CD14-positive monocyte (primary cell): ENCODE measurements at regions of chr4 and their contacts with region 1.

Region 1: DNA sequence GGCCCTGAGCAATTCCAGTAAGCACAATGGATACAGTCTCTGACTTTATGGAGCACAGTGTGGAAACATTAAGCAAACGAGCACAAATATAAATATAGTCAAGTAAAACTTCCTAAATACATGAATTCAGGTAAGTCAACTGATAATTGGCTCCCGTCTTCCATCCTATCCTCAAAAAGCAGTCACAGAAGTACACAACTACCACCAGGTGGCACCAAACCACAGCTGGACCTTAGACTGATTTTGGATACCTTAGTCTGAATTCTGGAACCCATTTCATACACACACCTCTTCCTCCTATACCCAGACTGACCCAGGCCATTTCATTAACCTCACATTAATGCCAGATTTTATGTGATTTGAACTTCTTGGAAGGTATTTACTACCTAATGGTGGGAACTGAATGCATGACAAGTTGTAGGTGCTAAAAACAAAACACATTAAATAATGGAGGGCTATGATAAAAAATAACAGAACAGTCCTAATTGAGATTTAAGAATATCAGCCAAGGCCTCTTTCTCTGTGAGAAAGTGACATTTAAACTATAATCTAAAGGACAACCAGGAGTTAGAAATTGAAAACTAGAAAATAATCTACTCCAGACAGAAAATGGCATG is 77.5 kb downstream of the ELF2 start:
- DNase-seq: peak; percentile 68 to 75 (median 68)
- H3K4me3 ChIP-seq: no peak overlapping the region
- H3K4me3 Mint-ChIP-seq: no peak overlapping the region
- H3K27ac ChIP-seq: no peak overlapping the region
- H3K27ac Mint-ChIP-seq: no peak overlapping the region
- H3K4me1 ChIP-seq: no peaks in the 10 kb centered on the region
- H3K4me1 Mint-ChIP-seq: no peaks in the 10 kb centered on the region
- H3K27me3 ChIP-seq: no peaks in the 10 kb centered on the region
- H3K27me3 Mint-ChIP-seq: no peaks in the 10 kb centered on the region
- CTCF ChIP-seq: peak; percentile 82

Region 2: DNA sequence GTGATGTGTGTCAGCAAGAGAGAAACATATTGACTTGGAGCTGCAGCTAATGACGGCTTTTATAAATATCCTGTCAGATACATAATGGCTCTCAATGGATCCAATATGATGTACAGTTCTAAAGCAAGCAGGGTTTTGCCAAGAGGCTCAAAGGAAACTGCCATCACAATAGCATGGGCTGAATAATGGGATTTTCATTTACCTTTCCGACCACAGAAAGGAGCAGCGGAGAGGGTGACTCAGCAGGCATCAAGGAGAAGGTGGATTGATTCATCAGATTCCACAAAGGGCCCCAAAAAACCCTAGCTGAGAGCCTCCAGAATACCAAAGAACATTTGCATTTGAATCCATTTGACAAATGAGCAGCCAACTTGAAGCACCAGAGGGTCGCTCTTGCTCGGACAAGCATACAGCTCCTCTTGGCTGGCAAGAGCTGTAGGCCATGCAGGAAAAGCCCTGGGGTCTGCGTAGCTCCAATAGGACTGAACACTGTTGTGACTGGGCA is 439.6 kb before region 1 on chr4:
- intact Hi-C with region 1: no loop called
- DNase-seq: no peak
- H3K4me3 ChIP-seq: no peak overlapping the region
- H3K4me3 Mint-ChIP-seq: no peak overlapping the region
- H3K27ac ChIP-seq: no peak overlapping the region
- H3K27ac Mint-ChIP-seq: no peak overlapping the region
- H3K4me1 ChIP-seq: no peaks in the 10 kb centered on the region
- H3K4me1 Mint-ChIP-seq: no peaks in the 10 kb centered on the region
- H3K27me3 ChIP-seq: no peaks in the 10 kb centered on the region
- H3K27me3 Mint-ChIP-seq: peaks cover 0 to 12% (median 3%) of the 10 kb centered on the region in 3 donors
- CTCF ChIP-seq: no peak

Region 3: DNA sequence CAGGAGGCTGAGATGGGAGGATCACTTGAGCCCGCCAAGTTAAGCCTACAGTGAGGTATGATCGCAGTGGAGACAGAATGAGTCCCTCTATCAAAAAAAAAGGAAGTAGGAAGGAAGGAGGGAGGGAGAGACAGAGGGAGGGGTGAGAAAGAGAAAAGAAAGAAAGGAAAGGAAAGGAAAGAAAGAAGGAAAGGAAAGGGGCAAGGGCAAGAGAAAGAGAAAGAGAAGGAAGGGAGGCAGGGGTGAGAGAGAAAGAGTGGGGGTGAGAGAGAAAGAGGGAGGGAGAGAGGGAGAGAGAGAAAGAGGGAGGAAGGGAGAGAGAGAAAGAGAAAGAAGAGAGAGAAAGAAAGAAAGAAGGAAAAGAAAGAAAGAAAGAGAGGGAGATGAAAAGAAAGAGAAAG is 64.3 kb after region 1 on chr4:
- intact Hi-C with region 1: loop called in 1 of 2 experiments (anchors 5 kb)
- DNase-seq: no peak
- H3K4me3 ChIP-seq: no peak overlapping the region
- H3K4me3 Mint-ChIP-seq: no peak overlapping the region
- H3K27ac ChIP-seq: peak overlapping the region in 1 of 2 donors; percentile 49
- H3K27ac Mint-ChIP-seq: peak overlapping the region in 6 of 7 donors; percentile 65 to 80 (median 72)
- H3K4me1 ChIP-seq: peaks cover 22 to 39% of the 10 kb centered on the region in 2 donors
- H3K4me1 Mint-ChIP-seq: peaks cover 40% of the 10 kb centered on the region
- H3K27me3 ChIP-seq: no peaks in the 10 kb centered on the region
- H3K27me3 Mint-ChIP-seq: no peaks in the 10 kb centered on the region
- CTCF ChIP-seq: no peak

Region 4: GRCh38 chr4:139229534-139230039 is 130.1 kb after region 1 on chr4:
- intact Hi-C with region 1: loop called in 1 of 2 experiments (anchors 5 kb)
- DNase-seq: peak; percentile 21 to 52 (median 51)
- H3K4me3 ChIP-seq: no peak overlapping the region
- H3K4me3 Mint-ChIP-seq: no peak overlapping the region
- H3K27ac ChIP-seq: no peak overlapping the region
- H3K27ac Mint-ChIP-seq: no peak overlapping the region
- H3K4me1 ChIP-seq: peaks cover 2 to 5% of the 10 kb centered on the region in 2 donors
- H3K4me1 Mint-ChIP-seq: peaks cover 13% of the 10 kb centered on the region
- H3K27me3 ChIP-seq: no peaks in the 10 kb centered on the region
- H3K27me3 Mint-ChIP-seq: peaks cover 0 to 2% (median 1%) of the 10 kb centered on the region in 3 donors
- CTCF ChIP-seq: peak; percentile 83